PC-9 (cell line): ENCODE measurements at regions of chr2 and their contacts with region 1.

Region 1: DNA sequence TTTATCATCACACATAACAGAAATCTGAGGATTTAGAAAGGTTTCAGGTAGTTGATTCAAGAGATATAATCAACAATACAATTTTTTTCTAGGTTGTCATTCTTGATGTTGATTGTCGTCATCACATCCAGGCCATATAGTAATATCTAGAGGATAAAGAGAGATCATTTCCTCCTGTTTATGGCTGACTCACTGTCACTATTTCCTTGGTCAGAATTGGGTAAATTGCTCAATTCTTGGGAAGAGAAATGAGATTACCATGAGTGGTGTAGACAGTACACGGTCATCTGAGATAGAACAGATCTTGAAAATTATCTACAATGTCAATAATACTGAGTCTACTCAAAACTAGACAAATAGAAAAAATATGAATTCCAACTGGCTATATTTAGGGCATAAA is 78.8 kb downstream of the ZNF804A start:
- DNase-seq: no peak
- H3K4me3 ChIP-seq: no peak overlapping the region
- H3K27ac ChIP-seq: no peak overlapping the region
- H3K4me1 ChIP-seq: no peaks in the 10 kb centered on the region
- H3K27me3 ChIP-seq: no peaks in the 10 kb centered on the region
- CTCF ChIP-seq: no peak

Region 2: GRCh38 chr2:184598316-184599053 is 78.7 kb before region 1 on chr2 and contains the start of gene ZNF804A:
- CTCF ChIA-PET with region 1: no interaction called
- POLR2A ChIA-PET with region 1: no interaction called
- intact Hi-C with region 1: no loop called
- DNase-seq: peak in 1 of 2 experiments; percentile 9
- H3K4me3 ChIP-seq: peak within 1 kb of the TSS; percentile 51; the same call in 1 of the 2 replicates
- H3K27ac ChIP-seq: no peak within 1 kb of the TSS
- H3K4me1 ChIP-seq: no peaks in the 10 kb centered on the region
- H3K27me3 ChIP-seq: no peaks in the 10 kb centered on the region
- CTCF ChIP-seq: no peak
- total RNA-seq, gene ZNF804A: not detected in 2 replicates

Region 3: GRCh38 chr2:185360776-185361175 is 683.6 kb after region 1 on chr2:
- CTCF ChIA-PET with region 1: no interaction called
- POLR2A ChIA-PET with region 1: interaction called, 19 read pairs
- intact Hi-C with region 1: no loop called
- DNase-seq: no peak
- H3K4me3 ChIP-seq: no peak overlapping the region
- H3K27ac ChIP-seq: no peak overlapping the region
- H3K4me1 ChIP-seq: no peaks in the 10 kb centered on the region
- H3K27me3 ChIP-seq: no peaks in the 10 kb centered on the region
- CTCF ChIP-seq: no peak